WTC11 (cell line): ENCODE measurements at regions of chr14 and their contacts with region 1.

Region 1: GRCh38 chr14:70027785-70028428 is 148.7 kb downstream of the SMOC1 start:
- DNase-seq: peak; percentile 91
- ATAC-seq: peak; percentile 87
- H3K4me3 Mint-ChIP-seq: no peak overlapping the region
- H3K27ac Mint-ChIP-seq: no peak overlapping the region
- H3K4me1 Mint-ChIP-seq: peaks cover 13% of the 10 kb centered on the region
- H3K27me3 Mint-ChIP-seq: no peaks in the 10 kb centered on the region; the same call in 1 of the 2 replicates
- CTCF ChIP-seq: peak; percentile 97

Region 2: GRCh38 chr14:69726761-69727511 is 301.0 kb before region 1 on chr14:
- CTCF ChIA-PET with region 1: interaction called, 19 read pairs
- POLR2A ChIA-PET with region 1: no interaction called
- DNase-seq: peak; percentile 87
- ATAC-seq: peak; percentile 95
- H3K4me3 Mint-ChIP-seq: peak overlapping the region; percentile 54
- H3K27ac Mint-ChIP-seq: no peak overlapping the region
- H3K4me1 Mint-ChIP-seq: 0 out of 2 replicates have a peak, but pooled peaks cover 3% of the 10 kb centered on the region
- H3K27me3 Mint-ChIP-seq: peaks cover 19% of the 10 kb centered on the region
- CTCF ChIP-seq: peak; percentile 69

Region 3: GRCh38 chr14:69818757-69819191 is 209.1 kb before region 1 on chr14:
- CTCF ChIA-PET with region 1: interaction called, 76 read pairs
- POLR2A ChIA-PET with region 1: no interaction called
- DNase-seq: peak; percentile 60
- ATAC-seq: peak; percentile 87
- H3K4me3 Mint-ChIP-seq: no peak overlapping the region
- H3K27ac Mint-ChIP-seq: no peak overlapping the region
- H3K4me1 Mint-ChIP-seq: peaks cover 2% of the 10 kb centered on the region; the same call in 1 of the 2 replicates
- H3K27me3 Mint-ChIP-seq: no peaks in the 10 kb centered on the region
- CTCF ChIP-seq: peak; percentile 89

Region 4: GRCh38 chr14:69879175-69880043 is 148.5 kb before region 1 on chr14 and contains the start of gene SMOC1:
- CTCF ChIA-PET with region 1: interaction called, 81 read pairs
- POLR2A ChIA-PET with region 1: no interaction called
- DNase-seq: peak; percentile 87
- ATAC-seq: peak; percentile 93
- H3K4me3 Mint-ChIP-seq: peak within 1 kb of the TSS; percentile 79
- H3K27ac Mint-ChIP-seq: no peak within 1 kb of the TSS
- H3K4me1 Mint-ChIP-seq: peaks cover 8% of the 10 kb centered on the region
- H3K27me3 Mint-ChIP-seq: peaks cover 50% of the 10 kb centered on the region
- CTCF ChIP-seq: no peak
- total RNA-seq, gene SMOC1: 0.76 to 1.1 TPM (median 1.0 TPM) in 3 replicates

Region 5: GRCh38 chr14:69896080-69896479 is 131.8 kb before region 1 on chr14:
- CTCF ChIA-PET with region 1: interaction called, 13 read pairs
- POLR2A ChIA-PET with region 1: no interaction called
- DNase-seq: no peak
- ATAC-seq: no peak
- H3K4me3 Mint-ChIP-seq: no peak overlapping the region
- H3K27ac Mint-ChIP-seq: no peak overlapping the region
- H3K4me1 Mint-ChIP-seq: no peaks in the 10 kb centered on the region
- H3K27me3 Mint-ChIP-seq: peaks cover 6% of the 10 kb centered on the region; the same call in 1 of the 2 replicates
- CTCF ChIP-seq: no peak

Region 6: GRCh38 chr14:69972755-69973154 is 55.2 kb before region 1 on chr14:
- CTCF ChIA-PET with region 1: interaction called, 10 read pairs
- POLR2A ChIA-PET with region 1: no interaction called
- DNase-seq: no peak
- ATAC-seq: no peak
- H3K4me3 Mint-ChIP-seq: no peak overlapping the region
- H3K27ac Mint-ChIP-seq: no peak overlapping the region
- H3K4me1 Mint-ChIP-seq: peaks cover 10% of the 10 kb centered on the region; the same call in 1 of the 2 replicates
- H3K27me3 Mint-ChIP-seq: no peaks in the 10 kb centered on the region
- CTCF ChIP-seq: no peak

Region 7: GRCh38 chr14:70013269-70013873 is 14.5 kb before region 1 on chr14:
- CTCF ChIA-PET with region 1: interaction called, 25 read pairs
- POLR2A ChIA-PET with region 1: no interaction called
- DNase-seq: peak; percentile 83
- ATAC-seq: peak; percentile 92
- H3K4me3 Mint-ChIP-seq: no peak overlapping the region
- H3K27ac Mint-ChIP-seq: no peak overlapping the region
- H3K4me1 Mint-ChIP-seq: peaks cover 20% of the 10 kb centered on the region
- H3K27me3 Mint-ChIP-seq: no peaks in the 10 kb centered on the region
- CTCF ChIP-seq: peak; percentile 81

Region 8: GRCh38 chr14:70108419-70108818 is 80.5 kb after region 1 on chr14:
- CTCF ChIA-PET with region 1: no interaction called
- POLR2A ChIA-PET with region 1: no interaction called
- DNase-seq: no peak
- ATAC-seq: no peak
- H3K4me3 Mint-ChIP-seq: no peak overlapping the region
- H3K27ac Mint-ChIP-seq: no peak overlapping the region
- H3K4me1 Mint-ChIP-seq: no peaks in the 10 kb centered on the region
- H3K27me3 Mint-ChIP-seq: no peaks in the 10 kb centered on the region; the same call in 1 of the 2 replicates
- CTCF ChIP-seq: no peak

Region 9: GRCh38 chr14:70139384-70139783 is 111.5 kb after region 1 on chr14:
- CTCF ChIA-PET with region 1: no interaction called
- POLR2A ChIA-PET with region 1: no interaction called
- DNase-seq: no peak
- ATAC-seq: no peak
- H3K4me3 Mint-ChIP-seq: no peak overlapping the region
- H3K27ac Mint-ChIP-seq: no peak overlapping the region
- H3K4me1 Mint-ChIP-seq: peaks cover 11% of the 10 kb centered on the region
- H3K27me3 Mint-ChIP-seq: no peaks in the 10 kb centered on the region
- CTCF ChIP-seq: no peak